CD4-positive, alpha-beta T cell (primary cell): ENCODE measurements at regions of chr12 and their contacts with region 1.

Region 1: DNA sequence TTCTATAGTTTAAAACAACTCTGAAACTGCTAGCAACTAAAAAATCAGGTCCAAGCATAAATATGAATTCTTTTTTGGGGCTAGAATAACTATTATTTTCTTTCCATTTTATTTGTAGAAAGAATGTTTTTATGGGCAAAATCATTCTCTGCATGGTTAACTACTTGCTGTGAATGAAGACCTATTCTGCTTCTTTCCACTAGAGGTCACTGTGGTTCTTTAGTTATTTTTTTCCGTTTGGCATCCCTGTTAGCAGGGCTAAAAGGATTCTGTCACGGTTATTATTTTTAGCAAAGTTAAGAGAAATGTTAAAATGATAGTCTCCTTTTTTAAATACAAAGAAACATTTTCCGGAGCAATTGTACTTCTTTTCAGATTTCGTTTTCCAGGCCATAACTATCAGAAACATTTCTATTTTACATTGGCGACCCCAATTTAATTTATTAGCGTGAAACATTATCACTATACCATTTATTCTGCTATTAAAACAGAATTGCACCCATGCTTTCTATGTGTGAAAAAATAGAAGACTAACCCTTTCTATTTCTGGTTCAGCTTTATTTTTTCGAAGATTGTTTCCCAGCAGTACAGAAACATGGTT is 404.8 kb downstream of the ATP23 start:
- DNase-seq: peak in 3 of 14 experiments; percentile 25 to 40 (median 26)
- ATAC-seq: peak; percentile 39
- H3K4me3 ChIP-seq: no peak overlapping the region
- H3K4me3 Mint-ChIP-seq: no peak overlapping the region
- H3K27ac ChIP-seq: no peak overlapping the region
- H3K27ac Mint-ChIP-seq: no peak overlapping the region
- H3K4me1 ChIP-seq: no peaks in the 10 kb centered on the region
- H3K4me1 Mint-ChIP-seq: no peaks in the 10 kb centered on the region
- H3K27me3 ChIP-seq: no peaks in the 10 kb centered on the region
- H3K27me3 Mint-ChIP-seq: peaks cover 26% of the 10 kb centered on the region
- CTCF ChIP-seq: peak; percentile 84

Region 2: GRCh38 chr12:59164991-59165718 is 819.0 kb after region 1 on chr12:
- CTCF ChIA-PET with region 1: no interaction called
- POLR2A ChIA-PET with region 1: no interaction called
- intact Hi-C with region 1: loop called in 1 of 2 experiments (anchors 10 kb)
- DNase-seq: peak in 1 of 14 experiments; percentile 3
- ATAC-seq: no peak
- H3K4me3 ChIP-seq: no peak overlapping the region
- H3K4me3 Mint-ChIP-seq: no peak overlapping the region
- H3K27ac ChIP-seq: no peak overlapping the region
- H3K27ac Mint-ChIP-seq: no peak overlapping the region
- H3K4me1 ChIP-seq: no peaks in the 10 kb centered on the region
- H3K4me1 Mint-ChIP-seq: no peaks in the 10 kb centered on the region
- H3K27me3 ChIP-seq: no peaks in the 10 kb centered on the region
- H3K27me3 Mint-ChIP-seq: no peaks in the 10 kb centered on the region
- CTCF ChIP-seq: peak; percentile 20